B cell (primary cell): ENCODE measurements at regions of chr7 and their contacts with region 1.

Region 1: GRCh38 chr7:1503816-1504775 is at the start of gene INTS1:
- DNase-seq: peak; percentile 93
- ATAC-seq: peak; percentile 90
- H3K4me3 ChIP-seq: peak within 1 kb of the TSS; percentile 55 to 93 (median 77)
- H3K4me3 Mint-ChIP-seq: peak within 1 kb of the TSS; percentile 89
- H3K27ac ChIP-seq: peak within 1 kb of the TSS in 1 of 2 donors; percentile 69
- H3K27ac Mint-ChIP-seq: peak within 1 kb of the TSS; percentile 88
- H3K4me1 ChIP-seq: peaks cover 28 to 47% of the 10 kb centered on the region in 2 donors
- H3K4me1 Mint-ChIP-seq: peaks cover 47% of the 10 kb centered on the region
- H3K27me3 ChIP-seq: no peaks in the 10 kb centered on the region
- H3K27me3 Mint-ChIP-seq: no peaks in the 10 kb centered on the region
- CTCF ChIP-seq: peak; percentile 88
- total RNA-seq, gene INTS1: 128 and 142 TPM in 2 replicates

Region 2: DNA sequence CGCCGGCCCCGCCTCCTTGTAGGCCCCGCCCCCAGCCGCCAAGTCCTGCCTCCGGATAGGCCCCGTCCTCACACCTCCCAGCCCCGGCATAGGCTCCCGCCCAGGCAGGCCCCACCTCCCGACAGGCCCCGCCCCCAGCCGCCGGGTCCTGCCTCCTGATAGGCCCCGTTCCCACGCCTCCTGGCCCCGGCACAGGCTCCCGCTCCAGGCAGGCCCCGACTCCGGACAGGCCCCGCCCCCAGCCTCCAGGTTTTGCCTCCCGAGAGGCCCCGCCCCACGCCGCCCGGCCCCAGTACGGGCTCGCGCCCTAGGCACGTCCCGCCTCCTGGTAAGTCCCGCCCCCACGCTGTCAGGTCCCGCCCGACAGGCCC is 44.6 kb before region 1 on chr7:
- CTCF ChIA-PET with region 1: no interaction called
- POLR2A ChIA-PET with region 1: no interaction called
- intact Hi-C with region 1: loop called (anchors 2 kb)
- DNase-seq: peak; percentile 97
- ATAC-seq: peak; percentile 95
- H3K4me3 ChIP-seq: peak overlapping the region in 4 of 5 experiments; percentile 53 to 79 (median 68)
- H3K4me3 Mint-ChIP-seq: peak overlapping the region; percentile 81
- H3K27ac ChIP-seq: no peak overlapping the region
- H3K27ac Mint-ChIP-seq: no peak overlapping the region
- H3K4me1 ChIP-seq: peaks cover 18 to 26% of the 10 kb centered on the region in 2 donors
- H3K4me1 Mint-ChIP-seq: peaks cover 20% of the 10 kb centered on the region
- H3K27me3 ChIP-seq: no peaks in the 10 kb centered on the region
- H3K27me3 Mint-ChIP-seq: no peaks in the 10 kb centered on the region
- CTCF ChIP-seq: no peak

Region 3: GRCh38 chr7:1493129-1493528 is 11.0 kb before region 1 on chr7:
- CTCF ChIA-PET with region 1: no interaction called
- POLR2A ChIA-PET with region 1: no interaction called
- intact Hi-C with region 1: no loop called
- DNase-seq: no peak
- ATAC-seq: no peak
- H3K4me3 ChIP-seq: no peak overlapping the region
- H3K4me3 Mint-ChIP-seq: no peak overlapping the region
- H3K27ac ChIP-seq: no peak overlapping the region
- H3K27ac Mint-ChIP-seq: no peak overlapping the region
- H3K4me1 ChIP-seq: no peaks in the 10 kb centered on the region
- H3K4me1 Mint-ChIP-seq: no peaks in the 10 kb centered on the region
- H3K27me3 ChIP-seq: no peaks in the 10 kb centered on the region
- H3K27me3 Mint-ChIP-seq: no peaks in the 10 kb centered on the region
- CTCF ChIP-seq: no peak

Region 4: DNA sequence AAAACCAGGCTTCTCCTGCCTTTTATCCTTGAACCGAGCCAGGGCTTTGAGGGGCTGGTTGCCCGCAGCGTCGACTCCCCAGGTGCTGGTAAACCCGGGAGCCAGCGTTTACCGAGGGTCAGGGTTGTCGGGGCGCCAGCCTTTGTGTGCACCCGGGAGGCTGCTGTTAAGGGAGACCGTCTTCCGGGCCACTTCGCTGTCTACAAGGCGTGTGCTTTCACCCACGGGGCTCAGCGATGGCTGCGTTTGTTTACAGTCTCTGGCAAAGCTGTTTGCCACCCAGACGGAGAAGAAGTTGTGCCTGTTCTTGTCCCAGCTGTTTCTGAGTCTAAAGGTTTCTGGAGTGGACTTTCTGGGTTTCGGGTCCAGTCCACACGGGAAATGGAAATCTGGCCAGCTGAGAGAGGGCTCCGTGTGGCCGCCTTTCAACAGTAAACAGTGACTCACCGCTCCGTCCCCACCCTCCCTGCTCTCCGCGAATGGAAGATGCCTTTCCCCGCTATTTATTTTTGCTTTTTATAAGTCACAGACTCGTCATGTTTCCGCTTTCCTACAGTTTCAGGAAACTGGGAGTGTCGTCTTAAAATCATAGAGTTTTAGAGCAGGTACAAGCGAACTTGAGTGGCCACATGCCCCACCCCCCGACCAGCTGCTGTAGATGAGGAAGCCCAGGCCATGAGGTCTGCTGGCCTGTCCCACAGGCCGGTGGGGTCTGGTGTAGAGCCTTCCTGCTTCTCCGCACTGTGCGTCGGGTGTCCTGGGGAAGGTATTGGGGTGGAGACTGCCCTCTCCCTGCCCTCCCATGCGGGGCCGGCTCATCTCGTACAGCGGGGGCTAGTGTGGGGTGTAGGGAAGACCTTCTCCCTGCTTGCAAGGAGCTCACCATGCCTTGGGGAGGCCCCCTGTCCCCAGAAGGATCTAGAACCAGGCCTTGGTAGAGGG is 28.7 kb after region 1 on chr7:
- CTCF ChIA-PET with region 1: interaction called, 10 read pairs
- POLR2A ChIA-PET with region 1: interaction called, 5 read pairs
- intact Hi-C with region 1: loop called (anchors 1 kb)
- DNase-seq: peak; percentile 55
- ATAC-seq: peak; percentile 36
- H3K4me3 ChIP-seq: peak overlapping the region; percentile 56 to 73 (median 61)
- H3K4me3 Mint-ChIP-seq: peak overlapping the region; percentile 92
- H3K27ac ChIP-seq: peak overlapping the region; percentile 78 to 84
- H3K27ac Mint-ChIP-seq: peak overlapping the region; percentile 94
- H3K4me1 ChIP-seq: peaks cover 24 to 38% of the 10 kb centered on the region in 2 donors
- H3K4me1 Mint-ChIP-seq: peaks cover 30% of the 10 kb centered on the region
- H3K27me3 ChIP-seq: no peaks in the 10 kb centered on the region
- H3K27me3 Mint-ChIP-seq: no peaks in the 10 kb centered on the region
- CTCF ChIP-seq: no peak

Region 5: GRCh38 chr7:1555809-1556540 is 51.9 kb after region 1 on chr7 and contains the start of gene TMEM184A:
- CTCF ChIA-PET with region 1: interaction called, 4 read pairs
- POLR2A ChIA-PET with region 1: no interaction called
- intact Hi-C with region 1: loop called (anchors 1 kb)
- DNase-seq: peak; percentile 66
- ATAC-seq: peak; percentile 82
- H3K4me3 ChIP-seq: no peak within 1 kb of the TSS
- H3K4me3 Mint-ChIP-seq: no peak within 1 kb of the TSS
- H3K27ac ChIP-seq: no peak within 1 kb of the TSS
- H3K27ac Mint-ChIP-seq: peak within 1 kb of the TSS; percentile 32
- H3K4me1 ChIP-seq: peaks cover 0 to 7% of the 10 kb centered on the region in 2 donors
- H3K4me1 Mint-ChIP-seq: peaks cover 3% of the 10 kb centered on the region
- H3K27me3 ChIP-seq: no peaks in the 10 kb centered on the region
- H3K27me3 Mint-ChIP-seq: no peaks in the 10 kb centered on the region
- CTCF ChIP-seq: peak; percentile 48
- total RNA-seq, gene TMEM184A: not detected in 2 replicates

Region 6: GRCh38 chr7:1569833-1570633 is 65.9 kb after region 1 on chr7 and contains the start of gene PSMG3:
- CTCF ChIA-PET with region 1: no interaction called
- POLR2A ChIA-PET with region 1: interaction called, 6 read pairs
- intact Hi-C with region 1: loop called (anchors 1 kb)
- DNase-seq: peak; percentile 92
- ATAC-seq: peak; percentile 91
- H3K4me3 ChIP-seq: peak within 1 kb of the TSS; percentile 18 to 87 (median 80)
- H3K4me3 Mint-ChIP-seq: peak within 1 kb of the TSS; percentile 90
- H3K27ac ChIP-seq: peak within 1 kb of the TSS; percentile 84 to 89
- H3K27ac Mint-ChIP-seq: peak within 1 kb of the TSS; percentile 91
- H3K4me1 ChIP-seq: peaks cover 12 to 24% of the 10 kb centered on the region in 2 donors
- H3K4me1 Mint-ChIP-seq: peaks cover 20% of the 10 kb centered on the region
- H3K27me3 ChIP-seq: no peaks in the 10 kb centered on the region
- H3K27me3 Mint-ChIP-seq: no peaks in the 10 kb centered on the region
- CTCF ChIP-seq: peak; percentile 30
- total RNA-seq, gene PSMG3: 27.4 and 28.6 TPM in 2 replicates